CD8-positive, alpha-beta memory T cell (primary cell): ENCODE measurements at regions of chr19 and their contacts with region 1.

Region 1: GRCh38 chr19:1241417-1242095 is at the start of gene ATP5F1D:
- DNase-seq: peak; percentile 83 to 93 (median 85)
- H3K4me3 ChIP-seq: peak within 1 kb of the TSS; percentile 39
- H3K4me3 Mint-ChIP-seq: peak within 1 kb of the TSS; percentile 84 to 93 (median 91)
- H3K27ac ChIP-seq: peak within 1 kb of the TSS; percentile 43
- H3K27ac Mint-ChIP-seq: peak within 1 kb of the TSS; percentile 89 to 98 (median 94)
- H3K4me1 ChIP-seq: peaks cover 53% of the 10 kb centered on the region
- H3K4me1 Mint-ChIP-seq: peaks cover 20 to 53% (median 22%) of the 10 kb centered on the region in 3 donors
- H3K27me3 ChIP-seq: no peaks in the 10 kb centered on the region
- H3K27me3 Mint-ChIP-seq: peaks cover 5 to 8% of the 10 kb centered on the region in 2 donors
- total RNA-seq, gene ATP5F1D: 179 to 180 TPM

Region 2: GRCh38 chr19:933216-933882 is 308.2 kb before region 1 on chr19:
- CTCF ChIA-PET with region 1: no interaction called
- POLR2A ChIA-PET with region 1: no interaction called
- DNase-seq: no peak
- H3K4me3 ChIP-seq: no peak overlapping the region
- H3K4me3 Mint-ChIP-seq: peak overlapping the region in 3 of 7 donors; percentile 19 to 82 (median 78)
- H3K27ac ChIP-seq: no peak overlapping the region
- H3K27ac Mint-ChIP-seq: no peak overlapping the region
- H3K4me1 ChIP-seq: peaks cover 16% of the 10 kb centered on the region
- H3K4me1 Mint-ChIP-seq: peaks cover 16 to 29% (median 17%) of the 10 kb centered on the region in 3 donors
- H3K27me3 ChIP-seq: no peaks in the 10 kb centered on the region
- H3K27me3 Mint-ChIP-seq: no peaks in the 10 kb centered on the region

Region 3: DNA sequence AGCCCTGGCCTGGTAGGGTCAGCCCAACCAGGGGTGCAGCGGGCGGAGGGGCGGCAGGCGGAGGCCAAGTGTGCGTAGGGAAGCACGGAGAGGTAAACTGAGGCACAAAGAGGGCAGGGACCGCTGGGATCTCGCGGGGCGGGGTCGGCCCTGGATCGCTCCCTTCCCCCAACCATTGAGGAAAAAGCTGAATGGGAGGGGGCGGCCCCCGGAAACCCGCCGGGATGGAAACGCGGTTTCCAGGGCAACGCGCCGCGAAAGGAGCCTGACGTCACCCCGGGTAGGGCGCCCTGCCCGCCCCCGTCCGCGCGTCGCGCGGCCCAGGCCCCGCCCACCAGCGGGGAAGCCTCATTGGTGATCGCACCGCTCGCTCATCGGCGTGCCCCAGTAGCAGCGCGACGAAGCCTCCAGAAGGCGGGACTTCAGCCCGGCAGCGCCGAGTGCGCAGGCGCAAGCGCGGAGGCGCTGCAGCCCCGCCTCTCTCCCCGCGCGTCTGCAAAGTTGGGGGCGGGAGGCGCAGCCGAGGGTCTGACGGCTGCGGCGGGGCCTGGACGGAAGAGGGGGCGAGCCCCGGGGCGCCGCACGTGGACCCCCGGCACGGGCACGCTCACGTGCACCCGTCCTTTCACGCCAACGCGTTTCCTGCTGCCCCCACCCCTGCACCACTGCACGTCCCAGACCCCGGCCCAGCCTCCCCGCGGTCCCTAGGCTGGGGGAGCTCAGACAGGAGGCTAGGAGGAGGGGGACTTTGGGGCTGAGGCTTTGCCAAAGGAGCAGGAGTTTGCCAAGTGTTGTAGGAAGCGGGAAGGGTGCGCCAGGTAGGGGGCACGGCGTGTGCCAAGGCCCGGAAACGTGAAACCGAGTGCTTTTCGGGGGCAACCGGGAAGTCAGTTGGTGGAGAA is 19.3 kb after region 1 on chr19:
- CTCF ChIA-PET with region 1: interaction called, 484 read pairs
- POLR2A ChIA-PET with region 1: interaction called, 280 read pairs
- DNase-seq: peak; percentile 95 to 99 (median 97)
- H3K4me3 ChIP-seq: peak overlapping the region; percentile 95
- H3K4me3 Mint-ChIP-seq: peak overlapping the region; percentile 89 to 96 (median 92)
- H3K27ac ChIP-seq: peak overlapping the region; percentile 98
- H3K27ac Mint-ChIP-seq: peak overlapping the region; percentile 98 to 100 (median 100)
- H3K4me1 ChIP-seq: peaks cover 70% of the 10 kb centered on the region
- H3K4me1 Mint-ChIP-seq: peaks cover 45 to 79% (median 48%) of the 10 kb centered on the region in 3 donors
- H3K27me3 ChIP-seq: no peaks in the 10 kb centered on the region
- H3K27me3 Mint-ChIP-seq: peaks cover 0 to 5% of the 10 kb centered on the region in 2 donors

Region 4: DNA sequence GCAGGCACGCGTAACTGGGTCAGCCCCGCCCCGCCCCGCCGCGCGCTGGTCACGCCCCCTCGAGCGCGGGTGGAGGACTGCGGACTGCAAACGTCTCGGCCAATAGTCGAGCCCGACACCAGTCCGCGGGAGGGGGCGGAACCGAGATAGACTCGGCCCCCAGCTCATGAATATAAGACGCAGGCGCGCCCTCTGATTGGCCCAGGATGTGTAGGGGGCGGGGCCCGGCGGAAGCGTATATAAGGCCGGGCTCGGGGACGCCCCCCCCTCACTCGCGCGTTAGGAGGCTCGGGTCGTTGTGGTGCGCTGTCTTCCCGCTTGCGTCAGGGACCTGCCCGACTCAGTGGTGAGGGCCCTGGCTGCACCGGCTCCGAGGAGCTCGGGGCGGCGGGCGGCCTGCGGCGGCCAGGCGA is 27.5 kb after region 1 on chr19 and contains the start of gene CIRBP:
- CTCF ChIA-PET with region 1: interaction called, 484 read pairs
- POLR2A ChIA-PET with region 1: interaction called, 280 read pairs
- DNase-seq: peak; percentile 98 to 100 (median 99)
- H3K4me3 ChIP-seq: peak within 1 kb of the TSS; percentile 99
- H3K4me3 Mint-ChIP-seq: peak within 1 kb of the TSS; percentile 86 to 92 (median 87)
- H3K27ac ChIP-seq: peak within 1 kb of the TSS; percentile 90
- H3K27ac Mint-ChIP-seq: peak within 1 kb of the TSS; percentile 90 to 98 (median 94)
- H3K4me1 ChIP-seq: peaks cover 75% of the 10 kb centered on the region
- H3K4me1 Mint-ChIP-seq: peaks cover 58 to 83% (median 58%) of the 10 kb centered on the region in 3 donors
- H3K27me3 ChIP-seq: no peaks in the 10 kb centered on the region
- H3K27me3 Mint-ChIP-seq: peaks cover 0 to 10% of the 10 kb centered on the region in 2 donors
- total RNA-seq, gene CIRBP: 253 to 258 TPM

Region 5: GRCh38 chr19:1275260-1275975 is 33.9 kb after region 1 on chr19 and contains the start of gene FAM174C:
- CTCF ChIA-PET with region 1: interaction called, 15 read pairs
- POLR2A ChIA-PET with region 1: interaction called, 17 read pairs
- DNase-seq: peak; percentile 96 to 99 (median 97)
- H3K4me3 ChIP-seq: peak within 1 kb of the TSS; percentile 74
- H3K4me3 Mint-ChIP-seq: peak within 1 kb of the TSS; percentile 79 to 87 (median 84)
- H3K27ac ChIP-seq: peak within 1 kb of the TSS; percentile 92
- H3K27ac Mint-ChIP-seq: peak within 1 kb of the TSS; percentile 78 to 98 (median 93)
- H3K4me1 ChIP-seq: peaks cover 61% of the 10 kb centered on the region
- H3K4me1 Mint-ChIP-seq: peaks cover 48 to 61% (median 50%) of the 10 kb centered on the region in 3 donors
- H3K27me3 ChIP-seq: no peaks in the 10 kb centered on the region
- H3K27me3 Mint-ChIP-seq: peaks cover 0 to 6% of the 10 kb centered on the region in 2 donors
- total RNA-seq, gene FAM174C: 113 TPM

Region 6: DNA sequence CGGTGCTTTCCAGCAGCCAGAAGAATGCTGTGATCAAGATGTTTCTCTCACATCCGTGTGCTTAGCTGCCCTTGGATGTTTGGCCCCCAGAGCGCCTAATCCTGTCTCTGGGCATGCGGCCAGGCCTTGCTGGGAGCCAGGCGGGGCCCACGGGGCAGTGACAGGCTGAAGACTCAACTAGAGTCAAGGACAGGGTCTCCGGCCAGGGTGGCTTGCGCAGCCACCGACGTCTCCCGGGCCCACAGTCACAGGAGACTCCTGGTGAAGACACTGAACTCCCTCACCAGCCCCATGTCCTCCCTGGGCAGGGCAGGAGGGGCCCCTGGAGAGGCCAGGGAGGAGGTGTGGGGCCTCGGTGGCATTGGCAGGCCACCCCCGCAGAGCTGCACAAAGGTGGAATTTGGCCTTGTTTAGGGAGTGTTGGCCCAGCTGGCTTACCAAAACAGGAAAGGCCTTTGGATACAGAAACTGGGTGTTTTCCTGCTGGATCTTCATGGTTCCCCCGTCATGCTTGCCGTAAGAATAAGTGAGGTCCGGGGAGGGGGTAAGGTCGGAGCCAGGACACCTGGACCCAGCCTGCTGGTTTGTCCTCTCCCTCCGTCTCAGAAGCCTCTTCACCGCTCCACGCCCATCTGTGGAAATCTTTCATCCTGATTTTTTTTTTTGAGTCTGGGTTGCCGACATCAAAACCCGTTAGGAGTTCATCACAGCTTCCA is 132.1 kb after region 1 on chr19:
- CTCF ChIA-PET with region 1: interaction called, 17 read pairs
- POLR2A ChIA-PET with region 1: no interaction called
- DNase-seq: no peak
- H3K4me3 ChIP-seq: no peak overlapping the region
- H3K4me3 Mint-ChIP-seq: no peak overlapping the region
- H3K27ac ChIP-seq: no peak overlapping the region
- H3K27ac Mint-ChIP-seq: no peak overlapping the region
- H3K4me1 ChIP-seq: no peaks in the 10 kb centered on the region
- H3K4me1 Mint-ChIP-seq: no peaks in the 10 kb centered on the region
- H3K27me3 ChIP-seq: no peaks in the 10 kb centered on the region
- H3K27me3 Mint-ChIP-seq: no peaks in the 10 kb centered on the region